Right ventricle myocardium inferior (tissue), 1 donor: ENCODE measurements at regions of chr3 and their contacts with region 1.

Region 1: GRCh38 chr3:158539414-158540014 is 31.5 kb upstream of the MLF1 start:
- DNase-seq: no peak
- ATAC-seq: no peak

Region 2: GRCh38 chr3:158330870-158331269 is 208.6 kb before region 1 on chr3:
- intact Hi-C with region 1: no loop called
- DNase-seq: no peak
- ATAC-seq: no peak

Region 3: DNA sequence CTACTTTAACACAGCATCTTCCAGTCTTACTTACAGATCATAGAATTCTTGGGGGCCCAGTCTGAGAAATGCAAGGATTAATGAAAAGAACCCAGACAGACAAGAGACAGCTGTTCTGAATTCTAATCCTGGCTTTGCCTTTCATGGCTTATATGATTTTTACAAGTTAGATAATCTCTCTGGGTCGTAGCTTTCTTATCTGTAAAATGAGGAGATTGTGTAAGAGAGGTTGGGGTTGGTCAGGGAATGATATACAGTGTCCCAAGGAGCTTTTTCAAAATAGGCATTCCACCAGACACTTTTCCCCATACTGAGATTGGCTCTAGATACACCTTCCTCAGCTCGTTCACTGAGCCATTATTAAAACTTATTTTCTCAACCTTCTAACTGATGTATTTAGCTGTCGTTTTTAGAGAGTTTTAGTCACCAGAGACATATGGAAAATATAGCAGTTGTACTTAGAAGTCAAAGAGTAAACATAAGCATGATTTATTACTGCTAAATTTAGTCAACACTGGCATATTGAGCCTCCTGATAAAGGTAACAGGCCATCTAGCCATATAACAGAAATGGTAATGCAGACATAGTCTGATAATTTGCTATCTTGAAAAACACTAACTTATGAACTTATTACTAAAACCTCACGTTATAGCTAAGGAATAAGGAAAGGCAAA is 131.5 kb before region 1 on chr3:
- intact Hi-C with region 1: no loop called
- DNase-seq: no peak
- ATAC-seq: no peak

Region 4: GRCh38 chr3:158570999-158571974 is 31.8 kb after region 1 on chr3 and contains the start of gene MLF1:
- intact Hi-C with region 1: loop called (anchors 5 kb)
- DNase-seq: peak; percentile 96
- ATAC-seq: peak; percentile 99
- total RNA-seq, gene MLF1: 191 TPM

Region 5: GRCh38 chr3:158590223-158590622 is 50.7 kb after region 1 on chr3:
- intact Hi-C with region 1: loop called (anchors 10 kb)
- DNase-seq: no peak
- ATAC-seq: no peak